Psoas muscle (tissue), 8 donors: ENCODE measurements at regions of chr18 and their contacts with region 1.

Region 1: DNA sequence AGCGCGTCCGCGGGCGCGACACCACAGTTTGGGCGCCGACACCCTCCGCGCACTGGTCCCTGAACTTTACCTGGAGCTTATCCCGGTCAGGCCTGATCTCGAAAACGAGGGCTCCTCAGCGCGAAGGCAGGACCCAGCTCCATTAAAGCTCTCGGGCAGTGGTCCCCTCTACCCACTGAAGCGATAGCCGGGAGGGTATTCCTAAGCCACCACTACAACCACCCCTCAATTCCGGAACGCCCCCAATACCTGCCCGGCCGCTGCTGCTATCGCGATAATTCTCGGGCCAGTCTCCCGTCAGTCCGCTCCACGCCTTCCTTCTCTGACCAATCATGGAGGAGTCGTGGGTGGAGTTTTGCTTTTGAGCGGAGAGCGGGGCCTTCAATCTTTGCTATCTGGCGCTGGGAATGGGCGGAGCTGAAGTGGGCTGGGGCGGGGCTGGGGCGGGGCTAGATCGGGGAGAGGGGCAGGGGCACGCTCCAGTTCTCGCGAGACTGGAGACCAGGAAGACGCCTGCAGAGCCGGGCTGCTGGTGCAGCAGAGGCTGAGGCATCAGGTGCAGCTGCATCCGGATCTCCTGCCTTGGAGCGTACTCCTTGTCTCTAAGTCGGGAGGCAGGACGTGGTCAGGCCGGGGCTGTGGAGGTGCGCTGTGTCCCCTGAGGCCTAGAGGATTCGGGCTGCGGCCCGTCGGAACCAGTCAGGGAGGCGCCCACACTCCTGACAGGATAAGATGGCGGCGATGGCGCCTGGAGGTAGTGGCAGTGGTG is at the starts of genes PIGN and RELCH:
- DNase-seq: peak; percentile 91 to 95
- ATAC-seq: peak; percentile 95 to 99 (median 99)
- H3K4me3 ChIP-seq: peak within 1 kb of the TSS; percentile 100
- H3K27ac ChIP-seq: peak within 1 kb of the TSS; percentile 84
- H3K4me1 ChIP-seq: peaks cover 36% of the 10 kb centered on the region
- H3K27me3 ChIP-seq: no peaks in the 10 kb centered on the region
- CTCF ChIP-seq: no peak
- total RNA-seq, gene PIGN: 9.5 to 18.0 (median 13.0) TPM
- total RNA-seq, gene RELCH: 7.8 to 13.4 (median 10.9) TPM

Region 2: GRCh38 chr18:62249478-62250097 is 62.6 kb after region 1 on chr18:
- intact Hi-C with region 1: loop called in 1 of 2 experiments (anchors 5 kb)
- DNase-seq: peak; percentile 33 to 53
- ATAC-seq: peak in 2 of 4 donors; percentile 62 to 73
- H3K4me3 ChIP-seq: no peak overlapping the region
- H3K27ac ChIP-seq: no peak overlapping the region
- H3K4me1 ChIP-seq: no peaks in the 10 kb centered on the region
- H3K27me3 ChIP-seq: no peaks in the 10 kb centered on the region
- CTCF ChIP-seq: peak; percentile 86

Region 3: DNA sequence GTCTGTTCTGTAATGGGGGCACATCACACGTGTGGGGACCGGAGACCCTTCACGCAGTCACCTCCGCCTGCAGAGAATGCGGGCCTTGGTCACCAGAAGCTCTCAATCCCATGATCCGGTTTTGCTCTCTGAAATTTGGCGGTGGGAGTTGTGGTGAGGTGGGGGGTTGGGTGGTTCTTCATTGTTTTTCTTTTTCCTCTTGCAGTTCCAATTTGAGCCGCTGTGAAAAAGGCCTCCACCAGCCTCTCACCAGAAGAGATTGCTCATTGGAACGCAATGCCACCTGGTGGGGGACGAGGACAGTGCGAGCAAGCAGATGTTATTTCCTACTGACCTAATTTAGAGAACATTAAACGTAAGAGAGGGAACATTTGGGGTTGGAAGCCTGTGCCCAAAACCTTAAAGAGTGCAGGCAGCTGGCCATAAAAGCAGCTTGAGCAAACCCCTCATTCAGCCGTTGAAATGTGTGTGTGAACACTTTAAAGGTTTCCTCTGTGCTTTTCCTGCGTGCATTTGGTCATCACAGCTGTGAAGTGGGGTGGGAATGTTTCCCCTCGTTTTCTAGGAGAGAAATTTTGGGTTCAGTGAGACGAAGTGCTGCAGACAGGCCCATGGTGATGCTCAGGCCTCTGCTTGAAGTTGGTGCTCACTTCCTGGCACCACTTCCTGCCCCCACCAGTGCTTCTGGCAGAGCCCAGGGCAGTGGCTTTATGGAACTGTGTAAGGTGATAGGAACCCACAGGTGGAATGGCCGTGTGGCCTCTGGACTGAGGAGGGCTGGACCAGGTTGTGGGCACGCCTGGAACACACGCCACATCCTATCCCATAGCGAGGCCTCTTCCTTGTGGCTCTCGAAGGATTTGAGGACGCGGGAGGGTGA is 397.5 kb after region 1 on chr18:
- intact Hi-C with region 1: loop called in 1 of 2 experiments (anchors 10 kb)
- DNase-seq: peak; percentile 84 to 91
- ATAC-seq: peak; percentile 90 to 93 (median 90)
- H3K4me3 ChIP-seq: peak overlapping the region; percentile 28
- H3K27ac ChIP-seq: peak overlapping the region; percentile 13
- H3K4me1 ChIP-seq: peaks cover 16% of the 10 kb centered on the region
- H3K27me3 ChIP-seq: no peaks in the 10 kb centered on the region
- CTCF ChIP-seq: peak; percentile 91